ENCODE measurements at regions of chr4 and their contacts with region 1.

Region 1: DNA sequence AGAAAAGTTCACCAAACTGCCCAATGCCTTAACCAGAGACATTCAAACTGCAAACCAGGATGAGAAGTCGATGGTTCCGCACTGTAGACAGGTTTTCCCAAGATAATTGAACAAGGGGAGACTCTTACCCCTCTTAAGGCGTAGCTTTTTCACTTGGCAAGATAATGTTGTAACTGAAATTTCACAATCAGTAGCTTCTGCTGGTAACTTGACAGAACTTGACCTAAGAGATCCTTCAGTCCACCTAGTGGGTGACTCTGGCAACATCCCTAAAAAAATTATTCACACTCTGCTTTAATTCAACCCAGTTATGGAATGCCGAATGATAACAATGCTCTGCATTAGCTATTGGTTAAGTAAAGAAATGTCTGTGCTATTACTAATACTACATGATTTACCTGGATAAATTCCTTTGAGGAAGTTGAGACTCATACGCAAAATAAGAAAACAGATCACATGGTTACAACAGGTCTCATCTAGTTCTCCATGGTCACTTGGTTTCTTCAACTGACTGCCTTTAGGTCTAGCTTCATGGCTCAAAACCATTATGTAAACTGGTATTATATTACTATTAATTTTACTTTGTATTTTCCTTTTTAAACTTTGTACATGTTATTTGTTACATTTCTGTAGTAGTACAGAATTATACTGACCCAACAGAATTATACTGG is 9.1 kb downstream of the ELF2 start:
- DNase-seq: no peak
- ATAC-seq: peak; percentile 80
- H3K4me3 ChIP-seq: no peak overlapping the region
- H3K27ac ChIP-seq: no peak overlapping the region
- H3K4me1 ChIP-seq: peaks cover 11% of the 10 kb centered on the region
- H3K27me3 ChIP-seq: no peaks in the 10 kb centered on the region
- CTCF ChIP-seq: peak; percentile 58; the same call in 1 of the 2 replicates

Region 2: DNA sequence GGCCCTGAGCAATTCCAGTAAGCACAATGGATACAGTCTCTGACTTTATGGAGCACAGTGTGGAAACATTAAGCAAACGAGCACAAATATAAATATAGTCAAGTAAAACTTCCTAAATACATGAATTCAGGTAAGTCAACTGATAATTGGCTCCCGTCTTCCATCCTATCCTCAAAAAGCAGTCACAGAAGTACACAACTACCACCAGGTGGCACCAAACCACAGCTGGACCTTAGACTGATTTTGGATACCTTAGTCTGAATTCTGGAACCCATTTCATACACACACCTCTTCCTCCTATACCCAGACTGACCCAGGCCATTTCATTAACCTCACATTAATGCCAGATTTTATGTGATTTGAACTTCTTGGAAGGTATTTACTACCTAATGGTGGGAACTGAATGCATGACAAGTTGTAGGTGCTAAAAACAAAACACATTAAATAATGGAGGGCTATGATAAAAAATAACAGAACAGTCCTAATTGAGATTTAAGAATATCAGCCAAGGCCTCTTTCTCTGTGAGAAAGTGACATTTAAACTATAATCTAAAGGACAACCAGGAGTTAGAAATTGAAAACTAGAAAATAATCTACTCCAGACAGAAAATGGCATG is 68.4 kb before region 1 on chr4:
- CTCF ChIA-PET with region 1: interaction called, 3 read pairs
- POLR2A ChIA-PET with region 1: no interaction called
- in situ Hi-C with region 1: no loop called
- intact Hi-C with region 1: loop called (anchors 2 kb)
- DNase-seq: peak; percentile 63
- ATAC-seq: peak; percentile 78; the same call in 1 of the 2 replicates
- H3K4me3 ChIP-seq: no peak overlapping the region
- H3K27ac ChIP-seq: no peak overlapping the region
- H3K4me1 ChIP-seq: no peaks in the 10 kb centered on the region
- H3K27me3 ChIP-seq: no peaks in the 10 kb centered on the region
- CTCF ChIP-seq: peak; percentile 80

Region 3: DNA sequence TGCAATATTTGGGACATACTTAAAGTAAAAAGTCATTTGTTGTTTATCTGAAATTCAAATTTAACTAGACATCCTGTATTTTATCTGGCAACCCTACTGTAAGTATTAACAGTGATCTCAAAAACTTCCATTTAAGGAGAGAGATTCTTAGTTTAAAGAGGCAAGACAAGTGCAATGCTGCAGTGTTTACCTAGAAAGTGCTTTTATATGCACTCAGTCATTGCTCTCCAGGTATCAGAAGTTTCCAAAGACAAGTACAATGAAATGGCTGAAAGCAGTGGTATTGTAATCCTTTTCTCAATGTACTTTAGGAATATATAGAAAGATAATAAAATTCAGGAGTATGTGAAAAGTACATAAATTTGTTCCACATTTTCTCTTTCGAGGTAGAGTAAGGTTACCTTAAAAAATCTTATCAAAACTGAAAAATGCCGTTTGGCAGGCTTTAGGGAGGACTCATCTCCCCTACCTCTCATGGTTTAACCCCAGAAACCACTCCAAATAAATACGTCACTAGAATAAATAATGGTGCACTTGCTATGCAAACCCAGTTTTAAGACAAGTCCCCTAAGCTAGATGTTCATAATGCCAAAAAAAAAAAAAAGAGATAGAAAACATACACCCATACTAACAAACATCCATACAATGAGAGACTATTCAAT is 36.6 kb before region 1 on chr4:
- CTCF ChIA-PET with region 1: no interaction called
- POLR2A ChIA-PET with region 1: no interaction called
- in situ Hi-C with region 1: no loop called
- intact Hi-C with region 1: no loop called
- DNase-seq: no peak
- ATAC-seq: no peak
- H3K4me3 ChIP-seq: no peak overlapping the region
- H3K27ac ChIP-seq: no peak overlapping the region
- H3K4me1 ChIP-seq: no peaks in the 10 kb centered on the region
- H3K27me3 ChIP-seq: no peaks in the 10 kb centered on the region
- CTCF ChIP-seq: no peak

Region 4: GRCh38 chr4:139540632-139541031 is 372.7 kb after region 1 on chr4:
- CTCF ChIA-PET with region 1: no interaction called
- POLR2A ChIA-PET with region 1: no interaction called
- in situ Hi-C with region 1: no loop called
- intact Hi-C with region 1: no loop called
- DNase-seq: no peak
- ATAC-seq: no peak
- H3K4me3 ChIP-seq: no peak overlapping the region
- H3K27ac ChIP-seq: no peak overlapping the region
- H3K4me1 ChIP-seq: no peaks in the 10 kb centered on the region
- H3K27me3 ChIP-seq: no peaks in the 10 kb centered on the region
- CTCF ChIP-seq: no peak